Posterior cingulate gyrus (tissue), 11 donors: ENCODE measurements at regions of chr17 and their contacts with region 1.

Region 1: GRCh38 chr17:19362277-19363113 is at the start of gene B9D1:
- DNase-seq: peak; percentile 89 to 98 (median 94)

Region 2: DNA sequence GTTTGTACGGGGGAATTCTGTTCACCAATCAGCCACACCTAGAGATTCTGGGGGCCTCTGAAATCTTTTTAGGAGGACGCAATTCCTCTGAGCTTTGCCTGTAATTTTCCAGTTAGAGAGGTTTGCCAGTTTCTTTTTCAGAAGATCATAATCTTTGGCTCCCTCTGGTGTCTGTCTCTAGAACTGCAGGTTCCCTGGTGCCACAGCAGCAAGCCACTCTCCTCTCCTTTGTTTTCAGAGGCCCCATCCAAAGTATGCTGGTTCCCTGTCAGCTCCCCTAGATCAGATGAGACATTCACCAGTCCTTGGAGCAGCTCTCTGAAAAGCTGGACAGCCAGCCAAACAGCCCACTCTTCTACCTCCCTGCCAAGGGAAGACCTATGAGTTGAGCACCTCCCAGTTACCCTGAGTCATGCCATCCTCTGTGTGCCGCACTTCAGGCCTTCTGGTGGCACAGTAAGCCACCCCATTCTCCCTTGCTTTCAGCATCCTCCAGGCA is 84.6 kb after region 1 on chr17:
- intact Hi-C with region 1: loop called (anchors 1 kb)
- DNase-seq: peak; percentile 42 to 92 (median 66)

Region 3: DNA sequence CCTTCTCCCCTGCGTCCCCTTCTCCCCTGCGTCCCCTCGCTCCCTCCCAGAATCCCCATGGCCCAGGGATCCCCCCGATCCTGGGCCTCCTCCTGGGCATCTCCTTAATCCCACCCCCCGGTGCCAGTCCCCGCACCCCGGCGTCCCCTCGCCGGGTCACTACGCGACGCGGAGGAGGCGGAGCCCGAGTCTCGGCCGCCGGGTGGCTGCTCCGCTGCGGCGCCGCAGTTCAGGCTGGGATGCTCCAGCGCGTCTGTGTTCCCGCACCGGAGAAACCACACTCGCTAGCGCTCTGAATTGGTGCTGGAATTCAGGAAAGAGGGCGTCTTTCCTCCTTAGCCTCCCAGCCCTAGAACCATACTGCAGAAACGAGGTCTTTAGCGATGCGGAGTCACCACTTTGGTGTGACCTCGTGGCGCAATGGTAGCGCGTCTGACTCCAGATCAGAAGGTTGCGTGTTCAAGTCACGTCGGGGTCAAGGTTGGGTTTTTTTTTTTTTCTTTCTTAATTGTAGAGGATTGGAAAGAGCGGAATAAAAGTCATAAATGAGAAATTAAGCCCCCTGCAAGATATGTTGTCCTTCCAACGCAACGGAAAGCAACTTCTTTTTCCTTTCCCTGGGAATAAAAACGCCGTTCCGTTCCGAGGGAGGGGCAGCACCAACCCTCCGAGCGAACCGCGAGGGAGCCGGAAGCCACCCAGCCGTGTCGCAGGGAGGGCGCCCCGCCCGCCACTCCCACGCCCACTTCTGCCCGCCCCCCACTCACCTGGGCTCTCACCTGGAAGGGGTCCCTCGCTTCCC is 145.5 kb after region 1 on chr17:
- intact Hi-C with region 1: loop called (anchors 5 kb)
- DNase-seq: peak; percentile 83 to 98 (median 92)

Region 4: DNA sequence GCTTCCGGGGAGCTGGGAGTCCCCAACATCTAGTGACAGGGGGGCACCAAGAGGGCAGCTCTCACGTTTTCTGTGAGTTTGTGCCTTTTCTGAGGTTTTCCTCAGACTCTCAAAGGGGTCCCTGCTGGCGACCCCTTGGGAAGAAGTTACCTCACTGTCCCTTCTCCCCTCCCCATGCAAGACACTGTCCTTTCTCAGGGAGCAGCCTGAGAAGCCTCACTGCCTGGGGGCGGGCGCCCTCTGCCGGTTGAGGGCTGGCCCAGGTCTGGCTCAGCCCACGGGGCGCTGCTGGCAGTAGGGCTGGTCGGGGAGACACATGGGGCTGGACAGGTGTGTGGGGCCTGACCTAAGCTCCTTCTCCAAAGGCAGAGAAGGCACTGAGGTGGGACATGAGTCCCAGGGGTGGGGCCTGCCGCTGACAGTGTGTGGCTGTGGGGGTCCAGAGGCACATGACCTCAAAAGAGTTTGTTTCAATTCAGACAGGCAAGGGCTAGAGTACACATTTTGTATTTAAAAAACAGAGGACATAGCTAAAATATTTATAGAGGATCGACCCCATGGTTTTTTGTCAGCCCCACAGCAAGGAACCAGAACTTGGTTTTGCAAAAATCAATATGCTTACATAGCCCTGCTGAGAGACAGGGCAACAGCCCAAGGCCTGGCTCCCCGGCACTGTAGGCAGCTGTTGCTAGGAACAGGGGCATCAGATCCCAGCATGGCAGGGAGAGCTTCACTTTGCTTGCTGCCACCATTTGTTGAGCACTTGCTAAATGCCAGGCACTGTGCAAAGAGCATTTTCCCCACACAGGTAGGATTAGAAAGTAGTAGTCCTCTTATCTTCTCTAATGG is 404.2 kb after region 1 on chr17:
- intact Hi-C with region 1: loop called (anchors 1 kb)
- DNase-seq: peak; percentile 58 to 98 (median 88)